ENCODE measurements at regions of chrX and their contacts with region 1.

Region 1: GRCh38 chrX:24693453-24694202 is at the start of gene POLA1:
- DNase-seq: peak; percentile 79
- H3K4me3 ChIP-seq: peak within 1 kb of the TSS; percentile 70
- CTCF ChIP-seq: peak; percentile 30

Region 2: GRCh38 chrX:24169211-24169610 is 524.4 kb before region 1 on chrX:
- CTCF ChIA-PET with region 1: no interaction called
- POLR2A ChIA-PET with region 1: no interaction called
- DNase-seq: no peak
- H3K4me3 ChIP-seq: no peak overlapping the region
- CTCF ChIP-seq: no peak

Region 3: DNA sequence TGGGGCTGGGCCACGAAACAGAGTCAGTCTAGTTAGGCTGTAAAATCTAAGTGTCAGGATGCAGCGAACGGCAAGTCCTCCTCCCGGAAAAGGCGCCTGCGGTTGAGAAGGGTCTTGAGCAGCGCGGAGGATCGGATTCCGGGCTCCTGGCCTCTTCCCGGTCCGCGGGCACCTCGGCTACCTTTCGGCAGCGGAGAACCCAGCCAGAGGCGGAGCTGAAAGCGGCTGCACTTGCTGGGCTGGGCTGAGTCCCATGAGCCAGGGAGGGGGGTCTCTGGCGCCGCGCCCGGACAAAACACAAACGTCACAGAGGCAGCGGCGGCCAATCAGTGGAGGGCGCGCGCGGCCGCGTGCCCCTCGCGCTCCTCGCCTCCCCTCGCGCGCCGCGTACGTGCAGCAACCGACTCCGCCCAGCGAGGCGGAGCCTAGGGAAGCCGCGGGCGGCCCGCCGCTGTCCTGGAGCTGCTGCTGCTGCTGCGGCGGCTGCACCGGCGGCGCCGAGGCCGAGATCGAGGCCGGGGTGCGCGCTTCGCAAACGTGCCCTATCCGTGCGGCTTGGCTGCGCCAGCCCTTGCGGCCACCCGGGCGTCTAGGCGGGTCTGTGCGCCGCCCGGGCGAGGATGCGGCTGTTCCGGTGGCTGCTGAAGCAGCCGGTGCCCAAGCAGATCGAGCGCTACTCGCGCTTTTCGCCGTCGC is 228.6 kb before region 1 on chrX and contains the start of gene PDK3:
- CTCF ChIA-PET with region 1: no interaction called
- POLR2A ChIA-PET with region 1: no interaction called
- DNase-seq: no peak
- H3K4me3 ChIP-seq: peak within 1 kb of the TSS; percentile 63
- CTCF ChIP-seq: no peak

Region 4: DNA sequence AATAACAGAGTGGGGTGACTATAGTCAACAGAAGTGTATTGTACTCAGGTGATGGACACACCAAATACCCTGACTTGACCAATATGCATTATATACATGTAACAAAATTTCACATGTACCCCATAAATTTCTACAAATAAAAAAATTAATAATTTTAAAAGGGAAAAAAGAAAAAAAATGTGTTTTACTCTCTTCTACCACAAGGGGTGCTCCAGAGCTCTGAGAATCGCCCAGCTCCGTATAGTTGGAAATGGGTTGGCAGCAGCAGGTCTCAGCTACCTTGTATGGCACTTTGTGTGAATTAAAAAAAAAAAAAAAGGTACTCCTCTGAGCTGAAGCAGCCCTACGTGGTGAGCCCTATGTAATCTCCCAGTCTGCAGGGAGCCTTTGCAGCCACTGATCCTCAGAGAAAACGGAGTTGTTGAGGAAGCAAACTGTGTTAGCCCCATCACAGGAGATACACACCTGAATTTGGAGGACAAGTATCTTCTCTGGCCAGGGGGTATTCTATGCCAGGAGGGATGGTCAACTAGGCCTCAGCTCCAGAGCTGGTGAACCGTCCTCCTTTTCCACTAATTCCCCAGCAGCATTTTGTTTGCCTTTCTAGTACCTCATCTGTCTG is 17.1 kb before region 1 on chrX:
- CTCF ChIA-PET with region 1: interaction called, 11 read pairs
- POLR2A ChIA-PET with region 1: no interaction called
- DNase-seq: no peak
- H3K4me3 ChIP-seq: no peak overlapping the region
- CTCF ChIP-seq: peak; percentile 33